H1 (cell line): ENCODE measurements at regions of chr3 and their contacts with region 1.

Region 1: DNA sequence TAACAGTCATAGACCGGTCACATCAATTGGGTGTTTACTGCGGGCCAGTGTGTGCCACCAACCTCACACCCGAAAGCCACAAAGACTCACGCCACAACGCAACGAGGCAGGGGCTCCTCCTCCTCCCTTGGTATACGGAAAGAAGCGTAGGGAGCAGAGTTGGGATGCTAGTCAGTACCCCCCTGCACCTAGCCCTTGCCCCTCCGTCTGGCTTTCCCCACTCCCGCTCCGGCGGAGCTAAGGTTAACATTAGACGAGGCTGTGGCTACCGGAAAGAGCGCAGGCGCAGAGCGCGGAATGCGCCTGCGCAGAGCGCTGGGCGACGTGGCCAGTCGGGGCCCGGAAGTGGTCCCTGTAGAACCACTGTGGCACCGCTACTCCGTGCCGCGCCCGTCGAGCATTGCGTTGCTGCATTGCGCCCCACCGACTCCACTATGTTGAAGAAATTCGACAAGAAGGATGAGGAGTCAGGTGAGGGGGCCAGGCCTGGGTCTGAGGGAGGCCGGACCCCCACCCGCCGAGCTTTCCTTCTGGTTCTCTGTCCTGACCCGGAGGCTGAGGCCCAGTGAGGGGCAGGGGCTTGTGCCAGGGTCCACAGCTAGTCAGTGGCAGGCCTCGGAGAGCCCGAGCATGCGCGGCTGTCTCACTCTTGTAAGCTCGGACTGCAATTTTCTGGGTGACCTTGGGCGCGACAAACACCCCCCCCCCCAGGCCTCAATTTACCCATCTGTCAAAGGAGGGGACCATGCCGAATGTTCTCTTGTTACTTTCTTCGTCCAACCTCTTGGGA is at the start of gene COPG1:
- DNase-seq: peak; percentile 73 to 90
- H3K4me3 ChIP-seq: peak within 1 kb of the TSS; percentile 75 to 93 (median 87)
- H3K27ac ChIP-seq: peak within 1 kb of the TSS; percentile 66
- H3K4me1 ChIP-seq: peaks cover 0 to 6% (median 1%) of the 10 kb centered on the region in 4 experiments; a peak in 4 of 7 replicates
- H3K27me3 ChIP-seq: no peaks in the 10 kb centered on the region
- CTCF ChIP-seq: peak in 1 of 3 experiments; percentile 7; a peak in 1 of 4 replicates
- EP300 ChIP-seq: no peak
- POLR2A ChIP-seq: peak; percentile 82 to 94
- RAD21 ChIP-seq: no peak
- total RNA-seq, gene COPG1: 104 and 106 TPM in 2 replicates

Region 2: GRCh38 chr3:129068291-129068886 is 181.1 kb before region 1 on chr3:
- CTCF ChIA-PET with region 1: interaction called, 10 read pairs
- POLR2A ChIA-PET with region 1: interaction called, 3 read pairs
- DNase-seq: no peak
- H3K4me3 ChIP-seq: peak overlapping the region in 2 of 4 experiments; percentile 23 to 51; a peak in 6 of 8 replicates
- H3K27ac ChIP-seq: no peak overlapping the region
- H3K4me1 ChIP-seq: no peaks in the 10 kb centered on the region
- H3K27me3 ChIP-seq: no peaks in the 10 kb centered on the region
- CTCF ChIP-seq: no peak
- EP300 ChIP-seq: no peak
- POLR2A ChIP-seq: no peak
- RAD21 ChIP-seq: no peak

Region 3: DNA sequence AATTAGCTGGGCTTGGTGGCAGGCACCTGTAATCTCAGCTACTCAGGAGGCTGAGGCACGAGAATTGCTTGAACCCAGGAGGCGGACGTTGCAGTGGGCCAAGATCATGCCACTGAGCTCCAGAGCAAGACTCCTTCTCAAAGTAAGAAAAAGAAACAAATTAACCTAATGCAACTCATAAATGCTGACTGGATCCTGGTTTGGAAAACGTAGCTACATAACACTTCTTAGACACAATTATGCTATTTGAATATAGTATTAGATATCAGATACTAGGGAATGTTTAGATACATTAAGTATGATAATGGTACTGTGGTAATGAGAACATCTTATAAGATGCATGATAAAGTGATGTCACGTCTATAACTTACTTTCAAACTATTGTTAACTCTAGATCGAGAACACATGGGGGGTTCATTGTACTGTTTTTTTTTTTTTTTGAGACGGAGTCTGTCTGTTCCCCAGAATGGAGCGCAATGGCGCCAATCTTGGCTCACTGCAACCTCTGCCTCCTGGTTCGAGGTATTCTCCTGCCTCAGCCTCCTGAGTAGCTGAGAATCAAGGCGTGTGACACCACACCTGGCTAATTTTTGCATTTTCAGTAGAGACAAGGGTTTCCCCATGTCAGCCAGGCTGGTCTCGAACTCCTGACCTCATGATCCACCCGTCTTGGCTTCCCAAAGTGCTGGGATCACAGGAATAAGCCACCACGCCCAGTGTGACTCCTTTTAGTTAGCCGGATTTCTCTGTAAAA is 82.7 kb before region 1 on chr3:
- CTCF ChIA-PET with region 1: interaction called, 38 read pairs
- POLR2A ChIA-PET with region 1: interaction called, 22 read pairs
- DNase-seq: no peak
- H3K4me3 ChIP-seq: no peak overlapping the region
- H3K27ac ChIP-seq: no peak overlapping the region
- H3K4me1 ChIP-seq: peaks cover 0 to 3% (median 1%) of the 10 kb centered on the region in 4 experiments; a peak in 4 of 7 replicates
- H3K27me3 ChIP-seq: no peaks in the 10 kb centered on the region
- CTCF ChIP-seq: no peak
- EP300 ChIP-seq: no peak
- POLR2A ChIP-seq: peak in 1 of 2 experiments; percentile 15; a peak in 1 of 3 replicates
- RAD21 ChIP-seq: no peak

Region 4: GRCh38 chr3:129195731-129196256 is 53.7 kb before region 1 on chr3:
- CTCF ChIA-PET with region 1: interaction called, 45 read pairs
- POLR2A ChIA-PET with region 1: interaction called, 3 read pairs
- DNase-seq: no peak
- H3K4me3 ChIP-seq: no peak overlapping the region
- H3K27ac ChIP-seq: no peak overlapping the region
- H3K4me1 ChIP-seq: no peaks in the 10 kb centered on the region
- H3K27me3 ChIP-seq: no peaks in the 10 kb centered on the region
- CTCF ChIP-seq: no peak
- EP300 ChIP-seq: no peak
- POLR2A ChIP-seq: no peak
- RAD21 ChIP-seq: no peak

Region 5: GRCh38 chr3:129224984-129225393 is 24.5 kb before region 1 on chr3:
- CTCF ChIA-PET with region 1: interaction called, 17 read pairs
- POLR2A ChIA-PET with region 1: interaction called, 8 read pairs
- DNase-seq: no peak
- H3K4me3 ChIP-seq: no peak overlapping the region
- H3K27ac ChIP-seq: no peak overlapping the region; the same call in 1 of the 2 replicates
- H3K4me1 ChIP-seq: peaks cover 3 to 12% (median 7%) of the 10 kb centered on the region in 4 experiments
- H3K27me3 ChIP-seq: no peaks in the 10 kb centered on the region; a peak in 1 of 7 replicates
- CTCF ChIP-seq: no peak
- EP300 ChIP-seq: no peak
- POLR2A ChIP-seq: no peak
- RAD21 ChIP-seq: no peak

Region 6: DNA sequence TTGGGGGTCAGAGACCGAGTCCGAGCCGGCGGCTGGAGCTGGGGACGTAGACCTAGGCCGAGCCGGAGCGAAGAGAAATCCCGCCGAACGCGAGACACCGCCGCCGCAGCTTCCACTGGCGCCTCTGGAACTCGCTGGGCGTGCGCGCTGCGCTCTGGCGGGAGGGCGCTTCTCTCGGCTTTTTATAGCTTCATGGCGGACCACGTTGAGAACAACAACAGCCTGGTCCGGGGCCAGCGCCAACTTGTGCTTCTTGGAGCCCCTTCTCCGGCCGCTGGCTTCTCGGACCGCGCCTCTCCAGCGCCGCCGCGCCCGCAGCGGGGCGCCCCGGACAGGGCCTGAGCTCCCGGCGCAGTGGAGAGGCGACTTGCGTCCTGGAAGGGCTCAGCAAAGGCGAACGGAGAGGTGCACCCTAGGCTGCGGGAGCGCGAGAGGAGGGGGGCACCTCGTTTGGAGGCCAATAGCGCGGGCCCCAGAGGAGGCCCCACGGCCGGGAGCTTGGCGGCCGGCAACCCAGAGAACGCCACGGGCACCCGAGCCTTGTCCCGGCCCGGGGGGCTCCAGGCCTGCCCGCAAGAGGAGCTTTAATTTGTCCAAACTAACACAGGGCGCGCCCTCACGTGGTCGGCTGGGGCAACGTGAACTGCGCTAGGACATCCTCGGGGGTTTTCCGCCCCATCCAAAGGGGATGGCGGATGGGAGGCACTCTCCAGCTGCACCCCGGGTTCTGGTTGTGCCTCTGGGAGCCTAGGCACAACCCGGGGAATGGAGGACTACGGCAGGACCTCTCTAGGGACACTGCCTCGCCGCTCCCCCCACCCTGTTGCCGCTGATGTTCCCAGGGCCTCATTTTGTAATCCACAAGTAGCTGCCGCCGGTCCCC is 66.9 kb after region 1 on chr3:
- CTCF ChIA-PET with region 1: interaction called, 3 read pairs
- POLR2A ChIA-PET with region 1: interaction called, 17 read pairs
- DNase-seq: peak in 1 of 2 experiments; percentile 96
- H3K4me3 ChIP-seq: peak overlapping the region; percentile 70 to 96 (median 78)
- H3K27ac ChIP-seq: peak overlapping the region; percentile 69
- H3K4me1 ChIP-seq: peaks cover 4 to 9% (median 5%) of the 10 kb centered on the region in 4 experiments
- H3K27me3 ChIP-seq: no peaks in the 10 kb centered on the region
- CTCF ChIP-seq: peak in 2 of 3 experiments; percentile 43 to 58; a peak in 3 of 4 replicates
- EP300 ChIP-seq: peak in 1 of 2 experiments; percentile 74; a peak in 1 of 3 replicates
- POLR2A ChIP-seq: peak in 1 of 2 experiments; percentile 99; a peak in 2 of 3 replicates
- RAD21 ChIP-seq: peak; percentile 41 to 51

Region 7: GRCh38 chr3:129343643-129344332 is 94.3 kb after region 1 on chr3:
- CTCF ChIA-PET with region 1: no interaction called
- POLR2A ChIA-PET with region 1: no interaction called
- DNase-seq: peak in 1 of 2 experiments; percentile 85
- H3K4me3 ChIP-seq: peak overlapping the region; percentile 25 to 57 (median 36)
- H3K27ac ChIP-seq: no peak overlapping the region
- H3K4me1 ChIP-seq: peaks cover 0 to 12% (median 8%) of the 10 kb centered on the region in 4 experiments; a peak in 6 of 7 replicates
- H3K27me3 ChIP-seq: no peaks in the 10 kb centered on the region
- CTCF ChIP-seq: peak; percentile 66 to 88 (median 75)
- EP300 ChIP-seq: no peak
- POLR2A ChIP-seq: no peak
- RAD21 ChIP-seq: peak; percentile 28 to 60; a peak in 3 of 4 replicates

Region 8: GRCh38 chr3:129377615-129378014 is 128.1 kb after region 1 on chr3:
- CTCF ChIA-PET with region 1: no interaction called
- POLR2A ChIA-PET with region 1: no interaction called
- DNase-seq: no peak
- H3K4me3 ChIP-seq: no peak overlapping the region
- H3K27ac ChIP-seq: no peak overlapping the region
- H3K4me1 ChIP-seq: no peaks in the 10 kb centered on the region
- H3K27me3 ChIP-seq: no peaks in the 10 kb centered on the region
- CTCF ChIP-seq: no peak
- EP300 ChIP-seq: no peak
- POLR2A ChIP-seq: no peak
- RAD21 ChIP-seq: no peak

Region 9: GRCh38 chr3:129593595-129594339 is 344.3 kb after region 1 on chr3:
- CTCF ChIA-PET with region 1: no interaction called
- POLR2A ChIA-PET with region 1: no interaction called
- DNase-seq: peak in 1 of 2 experiments; percentile 55
- H3K4me3 ChIP-seq: peak overlapping the region in 1 of 4 experiments; percentile 53; a peak in 1 of 8 replicates
- H3K27ac ChIP-seq: no peak overlapping the region
- H3K4me1 ChIP-seq: peaks cover 13 to 58% (median 48%) of the 10 kb centered on the region in 4 experiments
- H3K27me3 ChIP-seq: no peaks in the 10 kb centered on the region
- CTCF ChIP-seq: no peak
- EP300 ChIP-seq: no peak
- POLR2A ChIP-seq: no peak
- RAD21 ChIP-seq: no peak

Region 10: DNA sequence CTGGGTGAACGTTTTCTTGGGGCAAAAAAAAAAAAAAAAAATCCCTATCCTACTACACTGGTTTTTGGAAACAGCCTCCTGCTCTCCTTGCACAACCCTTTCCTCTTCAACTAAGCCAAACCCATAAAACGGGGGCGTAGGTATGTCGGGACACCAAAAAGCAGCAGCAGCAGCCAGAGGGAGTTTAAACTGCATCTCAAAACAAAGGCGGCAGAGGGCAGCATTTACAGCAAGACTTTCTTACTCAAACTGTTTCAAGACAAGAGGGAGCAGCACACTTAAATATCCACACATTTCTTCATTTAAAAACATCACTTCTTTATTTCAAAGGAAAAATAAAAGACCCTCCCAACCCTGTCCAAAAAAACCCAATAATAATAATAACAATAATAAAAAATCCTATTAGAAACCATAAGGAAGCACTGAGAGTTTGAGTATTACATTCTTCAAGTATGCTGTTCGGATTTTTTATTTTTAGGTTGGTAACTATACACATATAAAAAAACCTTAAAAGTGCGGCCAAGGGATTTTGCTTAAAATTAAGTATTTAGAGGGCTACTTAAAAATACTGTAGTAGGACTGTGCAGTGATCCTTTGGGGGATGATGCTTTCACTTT is 400.9 kb after region 1 on chr3:
- CTCF ChIA-PET with region 1: no interaction called
- POLR2A ChIA-PET with region 1: no interaction called
- DNase-seq: peak in 1 of 2 experiments; percentile 84
- H3K4me3 ChIP-seq: no peak overlapping the region
- H3K27ac ChIP-seq: no peak overlapping the region
- H3K4me1 ChIP-seq: peaks cover 0 to 4% (median 2%) of the 10 kb centered on the region in 4 experiments; a peak in 3 of 7 replicates
- H3K27me3 ChIP-seq: no peaks in the 10 kb centered on the region
- CTCF ChIP-seq: peak; percentile 39 to 91 (median 75)
- EP300 ChIP-seq: no peak
- POLR2A ChIP-seq: no peak
- RAD21 ChIP-seq: peak; percentile 89 to 94